Body of pancreas (tissue), 4 donors: ENCODE measurements at regions of chr4 and their contacts with region 1.

Region 1: GRCh38 chr4:183261953-183262775 is 57.9 kb downstream of the CLDN22 start:
- DNase-seq: peak; percentile 86 to 91 (median 88)
- ATAC-seq: peak; percentile 92
- H3K4me3 ChIP-seq: no peak overlapping the region
- H3K27ac ChIP-seq: peak overlapping the region; percentile 14 to 58 (median 50)
- H3K4me1 ChIP-seq: peaks cover 26% of the 10 kb centered on the region
- H3K27me3 ChIP-seq: no peaks in the 10 kb centered on the region
- CTCF ChIP-seq: peak; percentile 70 to 93 (median 85)
- POLR2A ChIP-seq: no peak

Region 2: DNA sequence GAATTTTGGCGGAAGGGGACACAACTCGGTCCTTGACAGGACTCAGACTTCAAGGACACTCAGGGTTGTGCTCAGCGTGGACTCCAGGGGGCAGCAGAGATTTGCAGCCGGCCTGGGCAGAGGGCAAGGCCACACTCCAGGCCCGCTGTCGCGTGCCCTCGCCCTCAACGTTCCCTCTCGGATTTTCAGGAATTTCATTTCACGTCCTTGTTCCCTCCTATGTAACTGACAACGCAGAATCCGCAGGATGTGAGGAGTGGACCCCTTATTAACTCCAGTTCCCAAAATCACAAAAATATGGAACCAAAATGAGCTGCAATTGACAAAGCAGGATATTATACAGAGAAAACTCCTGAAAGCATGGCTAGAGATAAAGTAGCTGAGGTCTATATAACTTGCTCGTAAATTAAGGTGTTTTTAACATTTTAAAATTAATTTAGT is 323.9 kb before region 1 on chr4:
- intact Hi-C with region 1: loop called (anchors 5 kb)
- DNase-seq: peak; percentile 71 to 77 (median 75)
- ATAC-seq: peak; percentile 98
- H3K4me3 ChIP-seq: no peak overlapping the region
- H3K27ac ChIP-seq: no peak overlapping the region
- H3K4me1 ChIP-seq: peaks cover 6% of the 10 kb centered on the region
- H3K27me3 ChIP-seq: no peaks in the 10 kb centered on the region
- CTCF ChIP-seq: peak; percentile 70 to 88 (median 86)
- POLR2A ChIP-seq: no peak

Region 3: DNA sequence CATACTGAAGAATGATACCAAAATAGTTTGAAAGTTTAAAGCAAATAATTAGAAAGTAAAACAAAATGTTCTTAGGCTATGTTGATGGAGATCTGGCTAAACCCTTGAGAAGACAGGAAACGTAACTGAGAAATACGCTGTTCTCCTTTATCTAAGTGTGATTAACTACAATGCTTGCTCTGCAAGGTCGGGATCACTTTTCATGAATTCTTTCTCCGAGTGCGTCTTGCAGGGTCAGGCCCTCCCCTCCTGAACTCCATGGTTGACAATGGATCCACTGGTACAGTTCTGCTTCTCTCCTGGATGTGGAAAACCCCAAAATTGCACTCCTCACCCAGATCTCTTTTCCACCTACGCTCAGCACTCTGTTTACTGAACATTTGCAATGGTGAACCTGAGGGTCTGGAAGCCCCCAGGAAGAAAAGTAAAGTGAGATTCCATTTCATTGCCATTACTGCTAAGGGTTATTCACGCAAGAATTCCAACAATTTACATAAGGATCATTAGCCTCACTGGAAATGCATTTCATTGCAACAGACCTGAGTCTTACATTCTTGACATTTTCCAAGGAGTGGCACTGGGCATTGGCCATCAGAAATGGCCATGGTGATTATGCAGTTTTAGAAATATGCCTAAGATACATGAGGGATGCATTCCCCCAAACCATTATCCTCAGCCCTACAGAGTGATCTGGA is 187.7 kb before region 1 on chr4:
- intact Hi-C with region 1: loop called (anchors 5 kb)
- DNase-seq: no peak
- ATAC-seq: no peak
- H3K4me3 ChIP-seq: no peak overlapping the region
- H3K27ac ChIP-seq: no peak overlapping the region
- H3K4me1 ChIP-seq: no peaks in the 10 kb centered on the region
- H3K27me3 ChIP-seq: no peaks in the 10 kb centered on the region
- CTCF ChIP-seq: no peak
- POLR2A ChIP-seq: no peak